Mucosa of descending colon (tissue), 3 donors: ENCODE measurements at regions of chr3 and their contacts with region 1.

Region 1: DNA sequence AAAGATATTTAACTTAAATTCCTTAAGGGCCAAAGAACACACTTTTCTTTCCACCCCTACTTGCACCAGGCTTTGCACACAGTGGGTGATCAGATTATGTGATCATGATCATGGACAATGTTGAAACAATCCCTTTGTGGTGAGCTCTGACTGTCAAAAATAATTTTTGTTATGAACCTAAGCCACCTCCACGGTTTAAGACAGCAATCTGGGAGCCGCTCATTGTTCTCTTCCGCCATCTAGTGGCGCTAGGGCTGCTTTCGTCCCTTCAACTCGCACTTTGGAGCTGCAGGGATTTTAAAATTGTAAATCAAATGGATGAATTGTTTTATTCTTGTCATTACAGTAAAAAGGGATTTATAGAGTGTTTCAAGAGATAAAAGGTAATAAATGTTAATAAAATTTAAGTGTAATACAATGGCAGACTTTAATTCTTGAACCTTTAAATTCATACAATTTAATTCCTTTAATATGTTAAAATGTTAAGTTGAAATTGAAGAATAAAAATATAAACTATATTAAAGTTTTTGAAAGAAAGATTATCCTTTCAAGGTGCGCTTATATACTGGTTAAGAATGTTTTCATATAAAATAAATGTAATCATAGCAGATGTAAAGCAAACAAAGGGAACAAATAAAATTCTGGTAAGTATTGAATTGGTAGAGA is 45.3 kb upstream of the ARL6 start:
- DNase-seq: peak in 2 of 3 donors; percentile 61 to 80
- ATAC-seq: peak; percentile 80
- H3K4me3 ChIP-seq: no peak overlapping the region
- H3K4me1 ChIP-seq: no peaks in the 10 kb centered on the region
- CTCF ChIP-seq: peak; percentile 50

Region 2: DNA sequence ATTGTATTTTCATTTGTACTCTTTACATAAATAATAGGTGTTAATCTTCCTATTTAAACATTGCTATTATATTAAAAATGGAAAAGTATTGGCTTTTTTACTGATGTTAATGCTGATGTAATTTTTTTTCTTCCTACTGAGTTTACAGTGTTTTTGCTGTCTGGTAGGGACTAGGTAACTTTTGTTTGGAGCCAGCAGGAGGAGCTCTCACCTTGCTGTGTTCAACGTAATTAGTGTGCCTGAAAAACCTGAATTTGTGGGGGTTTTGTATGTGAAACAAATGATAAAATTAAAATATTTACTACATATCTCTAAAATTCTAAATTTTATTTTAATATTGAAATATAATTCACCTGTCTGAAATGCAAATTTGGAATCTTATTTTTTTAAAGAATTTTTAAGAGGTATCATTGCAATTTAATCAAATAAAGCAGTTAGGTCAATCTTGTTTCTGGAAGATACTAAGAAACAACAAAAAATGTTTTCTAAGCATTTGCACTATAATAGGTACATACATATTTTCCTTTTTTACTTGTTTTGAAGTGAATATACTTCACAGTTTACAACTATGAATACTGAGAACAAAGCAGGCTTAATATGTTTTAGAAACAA is 856.1 kb before region 1 on chr3:
- intact Hi-C with region 1: loop called in 1 of 2 experiments (anchors 10 kb)
- DNase-seq: peak in 1 of 3 donors; percentile 40
- ATAC-seq: no peak
- H3K4me3 ChIP-seq: no peak overlapping the region
- H3K4me1 ChIP-seq: no peaks in the 10 kb centered on the region
- CTCF ChIP-seq: no peak

Region 3: GRCh38 chr3:97559388-97559787 is 159.9 kb before region 1 on chr3:
- intact Hi-C with region 1: no loop called
- DNase-seq: no peak
- ATAC-seq: no peak
- H3K4me3 ChIP-seq: no peak overlapping the region
- H3K4me1 ChIP-seq: no peaks in the 10 kb centered on the region
- CTCF ChIP-seq: no peak